ENCODE measurements at regions of chr11 and their contacts with region 1.

Region 1: GRCh38 chr11:17354601-17354991 is 3.0 kb downstream of the NCR3LG1 start:
- DNase-seq: no peak
- ATAC-seq: no peak

Region 2: DNA sequence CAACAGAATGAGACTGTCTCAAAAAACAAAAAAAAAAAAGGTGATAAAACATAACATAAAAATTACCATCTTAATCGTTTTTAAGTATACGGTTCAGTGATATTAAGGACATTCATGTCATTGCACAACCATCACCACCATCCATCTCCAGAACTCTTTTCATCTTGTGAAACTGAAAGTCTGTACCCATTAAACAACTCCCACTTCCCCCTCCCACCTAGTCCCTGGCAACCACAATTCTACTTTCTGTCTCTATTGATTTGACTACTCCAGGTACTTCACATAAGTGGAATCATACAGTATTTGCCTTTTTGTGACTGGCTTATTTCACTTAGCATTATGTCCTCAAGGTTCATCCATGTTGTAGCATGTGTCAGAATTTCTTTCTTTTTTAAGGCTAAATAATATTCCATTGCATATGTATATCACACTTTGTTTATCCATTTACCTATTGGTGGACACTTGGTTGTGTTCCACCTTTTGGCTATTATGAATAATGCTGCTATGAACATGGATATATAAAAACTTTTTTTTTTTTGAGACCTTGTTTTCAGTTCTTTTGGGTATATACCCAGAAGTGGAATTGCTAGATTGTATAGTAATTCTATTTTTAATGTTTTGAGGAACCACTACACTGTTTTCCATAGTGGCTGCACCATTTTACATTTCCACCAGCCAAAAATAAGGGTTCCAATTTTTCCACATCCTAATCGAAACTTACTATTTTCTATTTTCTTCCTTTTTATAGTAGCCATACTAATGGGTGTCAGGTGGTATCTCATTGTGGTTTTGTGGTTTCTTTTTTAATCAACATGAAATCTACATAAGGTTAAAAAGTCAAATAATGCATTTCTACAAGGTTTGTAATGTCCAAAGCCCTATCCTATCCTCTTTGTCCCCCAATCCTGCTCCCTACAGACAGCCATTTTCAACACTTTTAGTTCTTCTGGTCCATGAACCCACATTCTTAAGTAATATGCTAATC is 123.4 kb before region 1 on chr11:
- intact Hi-C with region 1: loop called (anchors 2 kb)
- DNase-seq: no peak
- ATAC-seq: no peak

Region 3: DNA sequence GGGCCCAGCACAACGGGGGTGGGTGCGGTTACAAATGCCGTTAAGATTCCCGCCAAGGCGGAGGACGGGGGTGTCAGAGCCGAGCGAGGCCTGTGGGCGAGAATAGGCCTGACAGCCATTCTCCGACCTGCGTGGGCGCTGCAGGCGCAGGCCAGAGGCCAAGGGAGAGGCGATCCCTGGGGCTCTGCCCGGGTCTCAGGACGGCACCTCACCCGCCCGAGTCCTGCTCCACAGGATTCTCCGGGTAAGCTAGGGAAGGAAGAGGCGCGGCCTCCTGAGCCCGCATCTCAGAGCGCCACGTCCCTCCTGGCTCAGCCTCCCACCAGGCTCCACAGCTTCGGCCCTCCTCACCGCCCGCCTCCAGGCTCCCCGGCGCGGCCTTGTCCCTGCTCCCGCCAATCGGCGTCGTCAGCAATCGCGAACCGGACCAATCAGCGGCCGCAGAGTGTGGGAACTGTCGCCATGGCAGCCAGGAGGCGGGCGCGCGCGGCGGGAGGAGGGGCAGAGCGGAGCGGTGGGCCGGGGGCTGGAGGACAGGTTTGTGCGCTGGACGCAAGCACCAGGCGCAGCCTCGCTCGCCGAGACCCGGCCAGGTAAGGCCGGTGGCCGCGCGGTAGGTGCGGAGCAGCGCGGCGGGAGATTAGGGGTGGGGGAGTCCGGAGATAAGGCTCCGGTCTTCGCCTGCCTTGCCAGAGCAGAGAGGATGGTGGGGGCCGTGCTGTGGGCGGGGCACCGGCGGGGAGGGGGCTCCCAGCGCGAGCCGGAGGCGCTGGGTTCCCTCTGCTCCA is 78.2 kb before region 1 on chr11 and contains the start of gene NUCB2:
- intact Hi-C with region 1: loop called (anchors 5 kb)
- DNase-seq: peak; percentile 99
- ATAC-seq: peak; percentile 100
- total RNA-seq, gene NUCB2: 111 TPM

Region 4: DNA sequence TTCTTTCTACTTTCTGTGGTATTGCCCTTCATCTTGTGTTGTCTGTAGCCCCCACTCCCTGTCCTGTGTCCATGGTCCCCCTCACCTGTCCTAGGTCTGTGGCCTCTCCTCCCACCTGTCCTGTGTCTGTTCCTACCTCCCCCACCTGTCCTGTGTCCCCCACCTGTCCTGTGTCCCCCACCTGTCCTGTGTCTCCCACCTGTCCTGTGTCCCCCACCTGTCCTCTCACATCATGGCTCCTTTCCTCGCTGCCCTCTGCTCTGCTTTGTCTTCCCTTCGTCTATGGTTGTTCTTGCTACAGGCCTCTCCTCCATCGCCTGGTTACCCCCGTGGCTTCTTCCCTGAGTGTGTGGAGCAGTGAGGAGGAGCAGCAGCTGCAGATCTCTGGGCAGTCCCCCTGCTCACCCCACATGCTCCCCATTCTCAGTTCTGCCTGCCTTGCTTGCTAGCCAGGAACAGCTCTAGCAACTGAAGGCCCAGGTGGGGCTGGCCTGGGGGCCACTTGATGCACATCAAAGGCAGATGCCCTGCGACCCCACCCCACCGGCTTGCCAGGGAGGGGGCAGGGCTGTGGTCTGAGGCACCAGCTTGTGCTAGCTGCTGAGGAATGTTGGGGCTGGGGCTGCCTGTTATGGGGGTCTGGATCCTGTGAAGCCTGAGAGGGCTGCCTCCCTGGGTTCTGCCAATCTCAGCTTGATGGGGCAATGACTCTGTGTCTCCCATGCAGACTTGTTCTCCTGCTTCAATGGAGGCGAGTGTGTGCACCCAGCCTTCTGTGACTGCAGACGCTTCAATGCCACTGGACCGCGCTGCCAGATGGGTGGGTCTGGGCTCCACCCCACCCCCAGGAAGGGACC is 198.0 kb after region 1 on chr11:
- intact Hi-C with region 1: no loop called
- DNase-seq: no peak
- ATAC-seq: no peak

Measured in Right ventricle myocardium inferior (tissue), 1 donor.